K562 (cell line): ENCODE measurements at regions of chr12 and their contacts with region 1.

Region 1: GRCh38 chr12:127677537-127678131 is 589.3 kb upstream of the TMEM132C start:
- DNase-seq: peak; percentile 43 to 69 (median 45)
- ATAC-seq: peak; percentile 92
- H3K4me3 ChIP-seq: no peak overlapping the region
- H3K27ac ChIP-seq: no peak overlapping the region
- H3K4me1 ChIP-seq: no peaks in the 10 kb centered on the region
- H3K27me3 ChIP-seq: no peaks in the 10 kb centered on the region
- CTCF ChIP-seq: peak; percentile 58 to 72 (median 64)
- EP300 ChIP-seq: no peak
- POLR2A ChIP-seq: no peak
- RAD21 ChIP-seq: peak; percentile 49 to 61

Region 2: DNA sequence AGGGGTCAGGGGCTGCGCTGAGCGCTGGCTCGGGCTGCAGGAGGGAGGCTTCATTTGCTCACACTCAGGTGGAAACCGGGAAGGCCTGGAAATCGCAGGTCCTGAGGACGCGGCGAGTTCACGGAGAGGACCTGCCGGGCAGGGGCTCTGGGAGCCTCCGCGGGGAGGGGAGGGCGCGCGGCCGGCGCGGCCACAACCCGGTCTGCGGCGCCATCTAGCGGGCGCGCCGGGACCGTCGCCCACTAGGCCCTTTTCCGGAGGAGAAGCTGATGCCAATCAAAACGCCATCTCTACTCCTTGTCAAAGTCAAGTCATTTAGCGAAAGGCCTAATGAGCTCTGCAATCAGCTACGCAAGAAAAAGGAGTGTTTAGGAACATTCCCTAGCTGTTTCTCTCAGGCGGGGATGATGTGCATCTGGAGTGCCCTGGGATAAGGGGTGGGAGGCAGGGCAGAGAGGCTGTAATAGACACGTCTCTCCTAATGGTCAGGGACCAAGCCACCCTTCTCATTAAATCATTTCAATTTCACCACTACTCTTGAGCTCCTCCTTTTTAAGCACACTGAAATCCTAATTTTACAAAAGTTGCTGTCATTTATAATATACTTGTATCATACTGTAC is 296.5 kb before region 1 on chr12:
- CTCF ChIA-PET with region 1: no interaction called
- POLR2A ChIA-PET with region 1: no interaction called
- in situ Hi-C with region 1: no loop called
- intact Hi-C with region 1: loop called (anchors 5 kb)
- DNase-seq: peak; percentile 70 to 85 (median 82)
- ATAC-seq: peak; percentile 100
- H3K4me3 ChIP-seq: no peak overlapping the region
- H3K27ac ChIP-seq: no peak overlapping the region
- H3K4me1 ChIP-seq: peaks cover 0 to 4% of the 10 kb centered on the region in 2 experiments; a peak in 1 of 5 replicates
- H3K27me3 ChIP-seq: peaks cover 0 to 5% of the 10 kb centered on the region in 2 experiments; a peak in 1 of 5 replicates
- CTCF ChIP-seq: peak; percentile 88 to 91 (median 90)
- EP300 ChIP-seq: no peak
- POLR2A ChIP-seq: no peak
- RAD21 ChIP-seq: peak; percentile 76 to 93